ENCODE measurements at regions of chr1 and their contacts with region 1.

Region 1: DNA sequence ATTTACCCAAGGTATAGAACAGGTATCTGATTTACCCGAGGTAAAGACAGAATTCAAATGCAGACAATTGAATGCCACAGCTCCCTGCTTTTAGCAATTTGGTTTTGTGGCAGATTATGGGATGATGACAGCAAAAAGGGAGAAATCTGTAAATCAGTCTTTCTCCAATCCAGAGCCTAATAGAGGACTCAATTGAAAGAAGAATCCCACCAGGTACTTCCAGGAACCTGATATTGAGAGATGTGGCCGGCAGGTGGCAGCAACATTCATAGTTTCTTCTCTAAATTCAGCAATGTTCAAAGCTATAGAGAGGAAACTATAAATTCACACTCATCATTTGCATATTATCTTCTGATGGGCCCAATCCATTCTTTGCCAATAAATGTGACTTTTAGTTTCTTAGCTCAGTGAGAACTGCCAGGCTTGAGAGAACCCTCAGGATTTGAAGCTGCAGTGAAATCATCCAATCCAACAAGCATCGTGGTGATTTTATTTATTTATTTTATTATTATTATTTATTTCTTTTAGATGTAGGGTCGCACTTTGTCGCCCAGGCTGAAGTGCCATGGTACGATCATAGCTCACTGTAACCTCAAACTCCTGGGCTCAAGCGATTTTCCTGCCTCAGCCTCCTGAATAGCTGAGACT is 9.8 kb upstream of the PHACTR4 start:
- DNase-seq: peak; percentile 93
- ATAC-seq: peak; percentile 84
- H3K4me3 Mint-ChIP-seq: no peak overlapping the region
- H3K27ac Mint-ChIP-seq: no peak overlapping the region
- H3K4me1 Mint-ChIP-seq: peaks cover 2% of the 10 kb centered on the region
- H3K27me3 Mint-ChIP-seq: no peaks in the 10 kb centered on the region
- CTCF ChIP-seq: peak; percentile 80

Region 2: GRCh38 chr1:28208818-28209441 is 150.8 kb before region 1 on chr1:
- CTCF ChIA-PET with region 1: no interaction called
- POLR2A ChIA-PET with region 1: no interaction called
- intact Hi-C with region 1: no loop called
- DNase-seq: peak; percentile 82
- ATAC-seq: peak; percentile 88
- H3K4me3 Mint-ChIP-seq: no peak overlapping the region
- H3K27ac Mint-ChIP-seq: no peak overlapping the region
- H3K4me1 Mint-ChIP-seq: peaks cover 3% of the 10 kb centered on the region
- H3K27me3 Mint-ChIP-seq: no peaks in the 10 kb centered on the region
- CTCF ChIP-seq: peak; percentile 81

Region 3: DNA sequence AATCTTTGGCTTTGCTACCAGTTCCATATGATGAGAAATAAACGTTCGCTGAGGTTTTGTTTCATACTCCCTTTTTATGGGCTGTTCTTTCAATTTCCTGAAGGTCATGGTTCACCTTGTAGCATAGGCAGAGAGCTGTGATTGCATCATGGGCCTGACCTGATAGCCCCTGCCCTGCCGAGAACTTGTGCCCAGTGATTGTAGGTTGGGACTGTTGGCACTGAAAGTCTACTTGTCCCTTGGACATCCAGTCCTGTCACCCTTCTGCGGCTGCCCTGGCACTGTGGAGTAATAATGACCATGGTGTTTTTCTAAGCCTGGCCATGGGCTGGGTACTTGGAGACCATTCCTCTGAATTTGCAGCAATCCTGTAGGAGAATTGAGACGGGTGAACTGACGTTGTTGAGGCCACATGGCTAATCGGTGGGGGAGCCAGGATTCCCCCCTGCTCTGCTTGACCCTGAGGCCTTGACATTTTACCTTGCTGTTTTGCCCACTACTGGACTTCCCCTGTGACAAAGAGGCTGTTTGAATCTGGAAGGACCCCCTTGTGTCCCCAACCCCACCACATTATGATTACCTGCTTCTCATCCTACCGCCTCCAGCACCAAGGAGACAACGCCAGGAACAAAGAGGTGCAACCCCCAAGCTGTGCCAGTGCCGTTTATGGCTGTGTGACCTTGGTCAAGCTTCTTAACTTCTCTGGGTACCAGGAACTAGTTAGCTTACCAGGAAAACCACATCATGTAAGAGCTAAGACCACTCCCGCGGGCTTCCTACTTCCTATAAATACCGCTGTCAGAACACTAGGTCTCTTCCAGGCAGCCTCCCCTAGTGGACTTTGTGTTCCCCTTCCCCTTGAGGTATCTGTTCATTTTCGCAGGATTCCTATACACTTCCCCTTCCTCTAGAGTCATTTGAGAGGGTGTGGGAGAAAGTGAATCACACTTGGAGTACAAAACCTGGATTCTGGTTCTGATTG is 77.0 kb before region 1 on chr1:
- CTCF ChIA-PET with region 1: no interaction called
- POLR2A ChIA-PET with region 1: no interaction called
- intact Hi-C with region 1: no loop called
- DNase-seq: no peak
- ATAC-seq: no peak
- H3K4me3 Mint-ChIP-seq: no peak overlapping the region
- H3K27ac Mint-ChIP-seq: peak overlapping the region; percentile 16
- H3K4me1 Mint-ChIP-seq: no peaks in the 10 kb centered on the region
- H3K27me3 Mint-ChIP-seq: no peaks in the 10 kb centered on the region
- CTCF ChIP-seq: no peak

Region 4: GRCh38 chr1:28295906-28296305 is 63.8 kb before region 1 on chr1:
- CTCF ChIA-PET with region 1: no interaction called
- POLR2A ChIA-PET with region 1: no interaction called
- intact Hi-C with region 1: no loop called
- DNase-seq: no peak
- ATAC-seq: no peak
- H3K4me3 Mint-ChIP-seq: no peak overlapping the region
- H3K27ac Mint-ChIP-seq: no peak overlapping the region
- H3K4me1 Mint-ChIP-seq: peaks cover 6% of the 10 kb centered on the region
- H3K27me3 Mint-ChIP-seq: peaks cover 5% of the 10 kb centered on the region
- CTCF ChIP-seq: no peak

Region 5: GRCh38 chr1:28341591-28341990 is 18.1 kb before region 1 on chr1:
- CTCF ChIA-PET with region 1: interaction called, 11 read pairs
- POLR2A ChIA-PET with region 1: no interaction called
- intact Hi-C with region 1: no loop called
- DNase-seq: no peak
- ATAC-seq: no peak
- H3K4me3 Mint-ChIP-seq: no peak overlapping the region
- H3K27ac Mint-ChIP-seq: no peak overlapping the region
- H3K4me1 Mint-ChIP-seq: peaks cover 14% of the 10 kb centered on the region
- H3K27me3 Mint-ChIP-seq: no peaks in the 10 kb centered on the region
- CTCF ChIP-seq: no peak

Region 6: DNA sequence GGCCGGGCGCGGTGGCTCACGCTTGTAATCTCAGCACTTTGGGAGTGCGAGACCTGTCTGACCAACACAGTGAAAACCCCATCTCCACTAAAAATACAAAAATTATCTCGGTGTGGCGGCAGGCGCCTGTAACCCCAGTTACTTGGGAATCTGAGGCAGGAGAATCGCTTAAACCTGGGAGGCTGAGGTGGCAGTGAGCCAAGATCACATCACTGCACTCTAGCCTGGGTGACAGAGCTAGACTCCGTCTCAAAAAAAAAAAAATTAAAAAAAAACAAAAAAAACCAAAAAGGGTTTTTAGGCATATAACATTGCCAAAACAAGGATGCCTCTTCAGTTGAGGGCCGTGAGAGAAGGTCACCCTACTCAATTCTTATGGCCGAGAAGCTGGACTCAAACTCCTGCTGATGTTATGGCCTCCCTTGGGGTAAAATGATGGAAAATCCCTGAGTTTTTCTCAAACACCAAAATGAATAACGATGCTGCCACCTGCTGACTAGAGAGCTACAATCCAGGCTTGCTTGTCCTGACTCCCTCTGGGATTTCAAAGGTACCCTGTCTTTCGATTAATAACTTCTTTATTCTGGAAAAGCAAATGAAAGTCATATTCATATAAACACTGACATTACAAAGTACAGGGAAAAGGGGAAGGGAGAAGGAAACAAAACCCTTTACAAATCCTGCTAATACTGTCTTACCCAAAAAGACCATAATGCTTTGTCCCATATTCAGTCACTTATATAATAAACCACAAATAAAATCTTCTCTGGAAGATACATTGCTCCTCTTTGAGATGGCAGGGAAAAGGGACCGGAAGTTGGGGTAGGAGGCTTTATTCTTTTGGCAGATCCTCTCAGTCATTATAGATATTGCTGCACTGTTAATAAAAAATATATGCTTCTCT is 243.1 kb after region 1 on chr1:
- CTCF ChIA-PET with region 1: interaction called, 10 read pairs
- POLR2A ChIA-PET with region 1: no interaction called
- intact Hi-C with region 1: no loop called
- DNase-seq: peak; percentile 50
- ATAC-seq: no peak
- H3K4me3 Mint-ChIP-seq: no peak overlapping the region
- H3K27ac Mint-ChIP-seq: no peak overlapping the region
- H3K4me1 Mint-ChIP-seq: peaks cover 7% of the 10 kb centered on the region
- H3K27me3 Mint-ChIP-seq: no peaks in the 10 kb centered on the region
- CTCF ChIP-seq: peak; percentile 77